ENCODE measurements at regions of chr7 and their contacts with region 1.

Region 1: GRCh38 chr7:77354484-77354883 is 61.7 kb downstream of the GSAP start:
- DNase-seq: no peak
- ATAC-seq: no peak
- H3K4me3 Mint-ChIP-seq: no peak overlapping the region
- H3K27ac Mint-ChIP-seq: no peak overlapping the region
- H3K4me1 Mint-ChIP-seq: peaks cover 45% of the 10 kb centered on the region
- H3K27me3 Mint-ChIP-seq: no peaks in the 10 kb centered on the region

Region 2: GRCh38 chr7:77331938-77332695 is 22.4 kb before region 1 on chr7:
- CTCF ChIA-PET with region 1: interaction called, 12 read pairs
- DNase-seq: peak; percentile 75
- ATAC-seq: peak; percentile 89
- H3K4me3 Mint-ChIP-seq: no peak overlapping the region
- H3K27ac Mint-ChIP-seq: peak overlapping the region; percentile 58
- H3K4me1 Mint-ChIP-seq: peaks cover 46% of the 10 kb centered on the region
- H3K27me3 Mint-ChIP-seq: no peaks in the 10 kb centered on the region

Measured in activated CD8-positive, alpha-beta memory T cell treated with anti-CD3 and anti-CD28 coated beads, Interleukin-2, amount 10 ng/mL, durations not matched to agents 7 days and 5 days (primary cell).